Activated CD8-positive, alpha-beta T cell treated with anti-CD3 and anti-CD28 coated beads for 36 hours (primary cell): ENCODE measurements at regions of chr15 and their contacts with region 1.

Region 1: DNA sequence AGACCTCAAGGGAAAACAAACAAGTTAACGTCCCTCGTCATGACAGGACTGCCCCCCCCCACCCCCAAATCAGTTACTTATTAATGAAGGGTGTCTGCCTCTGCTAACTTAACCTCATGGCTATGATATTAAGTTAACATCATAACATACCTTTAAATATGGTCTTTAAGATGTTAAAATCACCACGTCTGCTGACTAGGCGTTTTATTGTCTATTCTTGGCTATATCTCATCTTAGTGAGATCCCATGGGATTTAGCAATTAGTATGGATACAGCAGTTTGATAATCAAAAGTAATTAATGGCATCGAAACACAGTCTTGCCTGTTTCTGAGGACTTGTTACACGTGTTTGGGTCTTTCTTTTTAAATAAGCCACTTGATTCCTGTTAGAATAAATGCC is 186.9 kb downstream of the FOXB1 start:
- DNase-seq: no peak
- ATAC-seq: no peak
- H3K4me3 Mint-ChIP-seq: no peak overlapping the region
- H3K27ac Mint-ChIP-seq: no peak overlapping the region
- H3K4me1 Mint-ChIP-seq: peaks cover 4% of the 10 kb centered on the region
- H3K27me3 Mint-ChIP-seq: peaks cover 29% of the 10 kb centered on the region
- CTCF ChIP-seq: no peak

Region 2: DNA sequence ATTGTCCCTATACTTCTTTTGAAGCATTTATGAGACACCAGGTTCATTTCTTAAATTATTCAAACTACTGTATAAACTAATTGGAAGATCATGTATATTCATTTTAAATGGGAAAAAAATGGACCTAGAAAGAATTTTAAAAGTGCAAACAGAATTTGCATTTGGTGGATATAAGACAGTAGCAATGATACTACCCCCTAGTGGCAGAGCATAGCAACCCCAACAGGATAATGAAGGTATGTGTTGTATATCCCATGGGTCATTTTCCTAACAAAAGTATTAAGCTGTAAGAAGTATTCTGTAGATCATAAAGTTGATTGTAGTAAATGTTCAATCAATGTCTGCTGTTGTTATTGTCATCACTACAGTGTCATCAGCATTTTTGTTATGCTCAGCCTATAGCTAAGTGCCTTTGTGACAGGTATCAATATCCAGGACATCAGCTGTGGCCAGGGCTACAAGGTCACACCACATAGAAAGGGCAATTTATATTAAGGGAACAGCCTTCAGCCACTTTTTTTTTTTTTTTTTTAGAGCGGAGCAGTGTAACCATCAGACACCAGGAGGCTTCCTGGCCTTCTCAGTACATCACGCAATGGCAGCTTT is 11.1 kb before region 1 on chr15:
- CTCF ChIA-PET with region 1: interaction called, 16 read pairs
- POLR2A ChIA-PET with region 1: no interaction called
- intact Hi-C with region 1: no loop called
- DNase-seq: peak; percentile 61
- ATAC-seq: peak; percentile 68
- H3K4me3 Mint-ChIP-seq: no peak overlapping the region
- H3K27ac Mint-ChIP-seq: no peak overlapping the region
- H3K4me1 Mint-ChIP-seq: no peaks in the 10 kb centered on the region
- H3K27me3 Mint-ChIP-seq: peaks cover 15% of the 10 kb centered on the region
- CTCF ChIP-seq: peak; percentile 96